Mammary epithelial cell (primary cell): ENCODE measurements at regions of chr20 and their contacts with region 1.

Region 1: GRCh38 chr20:53773792-53774401 is 180.3 kb upstream of the ZNF217 start:
- DNase-seq: peak; percentile 94
- H3K4me3 ChIP-seq: peak overlapping the region in 1 of 3 experiments; percentile 27
- H3K27ac ChIP-seq: peak overlapping the region; percentile 100
- H3K4me1 ChIP-seq: peaks cover 25% of the 10 kb centered on the region
- H3K27me3 ChIP-seq: no peaks in the 10 kb centered on the region
- CTCF ChIP-seq: no peak

Region 2: GRCh38 chr20:53623454-53624211 is 150.3 kb before region 1 on chr20:
- CTCF ChIA-PET with region 1: no interaction called
- dilution Hi-C with region 1: no loop called
- in situ Hi-C with region 1: no loop called
- intact Hi-C with region 1: loop called (anchors 2 kb)
- DNase-seq: peak; percentile 69
- H3K4me3 ChIP-seq: peak overlapping the region in 1 of 3 experiments; percentile 14
- H3K27ac ChIP-seq: peak overlapping the region; percentile 84
- H3K4me1 ChIP-seq: peaks cover 26% of the 10 kb centered on the region
- H3K27me3 ChIP-seq: no peaks in the 10 kb centered on the region
- CTCF ChIP-seq: no peak

Region 3: DNA sequence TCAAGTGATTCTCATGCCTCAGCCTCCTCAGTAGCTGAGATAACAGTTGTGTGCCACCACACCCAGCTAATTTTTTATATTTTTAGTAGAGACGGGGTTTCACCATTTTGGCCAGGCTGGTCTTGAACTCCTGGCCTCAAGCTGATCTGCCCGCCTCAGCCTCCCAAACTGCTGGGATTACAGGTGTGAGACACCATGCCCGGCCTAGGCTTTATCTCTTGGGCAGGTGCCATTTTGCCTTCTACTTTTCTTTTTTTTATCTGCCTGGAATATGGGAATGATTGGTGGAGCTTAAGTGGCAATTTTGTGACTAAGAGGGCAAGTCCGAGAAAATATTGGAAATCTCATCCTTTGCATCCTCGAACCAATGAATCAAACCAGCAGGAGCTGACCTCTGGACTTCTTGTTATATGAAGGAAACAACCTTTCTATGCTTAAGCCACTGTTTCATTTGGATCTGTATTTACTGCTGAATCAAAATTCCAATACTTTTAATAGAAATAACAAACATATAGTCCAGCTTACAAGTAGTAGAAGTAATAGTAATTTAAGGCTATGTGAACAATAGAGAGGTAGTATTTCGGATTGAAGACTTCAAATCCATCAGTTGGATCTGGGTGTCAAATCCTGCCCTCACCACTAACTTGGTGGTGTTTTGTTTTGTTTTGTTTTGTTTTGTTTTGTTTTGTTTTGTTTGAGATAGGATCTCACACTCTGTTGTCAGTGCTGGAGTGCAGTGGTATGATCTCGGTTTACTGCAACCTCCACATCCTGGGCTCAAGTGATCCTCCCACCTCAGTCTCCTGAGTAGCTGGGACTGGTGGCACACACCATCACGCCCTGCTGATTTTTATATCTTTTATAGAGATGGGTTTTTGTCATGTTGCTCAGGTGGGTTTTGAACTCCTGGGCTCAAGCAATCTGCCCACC is 51.1 kb before region 1 on chr20:
- CTCF ChIA-PET with region 1: no interaction called
- dilution Hi-C with region 1: no loop called
- in situ Hi-C with region 1: no loop called
- intact Hi-C with region 1: no loop called
- DNase-seq: no peak
- H3K4me3 ChIP-seq: no peak overlapping the region
- H3K27ac ChIP-seq: no peak overlapping the region
- H3K4me1 ChIP-seq: no peaks in the 10 kb centered on the region
- H3K27me3 ChIP-seq: no peaks in the 10 kb centered on the region
- CTCF ChIP-seq: no peak

Region 4: GRCh38 chr20:53805895-53806384 is 32.0 kb after region 1 on chr20:
- CTCF ChIA-PET with region 1: no interaction called
- dilution Hi-C with region 1: no loop called
- in situ Hi-C with region 1: no loop called
- intact Hi-C with region 1: loop called (anchors 1 kb)
- DNase-seq: peak; percentile 88
- H3K4me3 ChIP-seq: no peak overlapping the region
- H3K27ac ChIP-seq: peak overlapping the region; percentile 89
- H3K4me1 ChIP-seq: peaks cover 23% of the 10 kb centered on the region
- H3K27me3 ChIP-seq: no peaks in the 10 kb centered on the region
- CTCF ChIP-seq: no peak